ENCODE measurements at regions of chr9 and their contacts with region 1.

Region 1: GRCh38 chr9:109182940-109183798 is 16.1 kb upstream of the FRRS1L start:
- DNase-seq: peak; percentile 62 to 68
- ATAC-seq: peak; percentile 88 to 89
- H3K4me3 ChIP-seq: no peak overlapping the region
- H3K27ac ChIP-seq: no peak overlapping the region
- H3K4me1 ChIP-seq: 0 out of 3 replicates have a peak, but pooled peaks cover 3% of the 10 kb centered on the region
- CTCF ChIP-seq: peak; percentile 58
- EP300 ChIP-seq: no peak
- POLR2A ChIP-seq: no peak
- RAD21 ChIP-seq: peak; percentile 40 to 41; a peak in 3 of 5 replicates

Region 2: GRCh38 chr9:108978205-108978604 is 205.0 kb before region 1 on chr9:
- CTCF ChIA-PET with region 1: no interaction called
- POLR2A ChIA-PET with region 1: no interaction called
- DNase-seq: no peak
- ATAC-seq: no peak
- H3K4me3 ChIP-seq: no peak overlapping the region
- H3K27ac ChIP-seq: no peak overlapping the region
- H3K4me1 ChIP-seq: no peaks in the 10 kb centered on the region
- CTCF ChIP-seq: no peak
- EP300 ChIP-seq: no peak
- POLR2A ChIP-seq: no peak
- RAD21 ChIP-seq: no peak

Region 3: DNA sequence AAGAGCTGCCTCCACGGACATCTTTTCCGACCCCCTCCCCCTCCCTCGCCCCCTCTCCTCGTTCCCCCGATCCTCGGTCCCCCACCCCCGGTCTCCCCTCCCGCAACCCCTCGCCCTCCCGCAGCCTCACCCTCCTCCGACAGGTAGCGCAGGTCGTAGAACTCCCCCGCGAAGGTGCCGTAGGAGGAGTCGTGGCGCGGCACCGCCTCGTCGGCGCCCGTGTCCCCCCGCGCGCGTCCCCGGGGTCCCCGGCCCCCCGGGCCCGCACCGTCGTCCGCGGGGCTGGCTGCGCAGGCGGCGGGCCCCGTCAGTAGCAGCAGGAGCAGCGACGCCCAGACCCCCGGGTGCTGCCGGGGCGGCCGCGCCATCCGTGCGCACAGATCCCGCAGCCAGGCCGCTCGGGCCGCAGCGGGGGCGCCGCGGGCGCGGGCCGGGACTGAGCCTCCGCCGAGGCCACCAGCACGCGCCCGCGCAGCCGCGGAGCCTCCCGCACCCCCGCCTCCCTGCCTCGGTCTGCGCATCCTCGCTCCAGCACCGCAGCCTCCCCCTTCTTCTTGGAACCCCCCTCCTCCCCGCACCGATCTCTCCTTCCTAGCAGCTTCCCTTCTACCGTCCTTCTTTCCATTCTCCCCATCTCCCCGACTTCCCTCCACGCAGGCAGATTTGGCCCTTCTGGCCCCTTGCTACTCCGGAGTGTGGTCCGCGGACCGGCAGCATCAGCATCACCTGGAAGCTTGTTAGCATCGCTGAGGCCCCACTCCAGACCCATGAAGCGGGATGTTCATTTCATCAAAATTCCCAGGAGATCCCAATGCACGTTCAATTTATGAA is 16.2 kb before region 1 on chr9 and contains the start of gene FRRS1L:
- CTCF ChIA-PET with region 1: interaction called, 27 read pairs
- POLR2A ChIA-PET with region 1: no interaction called
- DNase-seq: no peak
- ATAC-seq: peak; percentile 59 to 60; a peak in 5 of 6 replicates
- H3K4me3 ChIP-seq: peak within 1 kb of the TSS; percentile 44
- H3K27ac ChIP-seq: peak within 1 kb of the TSS; percentile 47 to 76; a peak in 4 of 6 replicates
- H3K4me1 ChIP-seq: no peaks in the 10 kb centered on the region
- CTCF ChIP-seq: no peak
- EP300 ChIP-seq: no peak
- POLR2A ChIP-seq: no peak
- RAD21 ChIP-seq: no peak
- polyA plus RNA-seq, gene FRRS1L: 1.5 TPM in 2 replicates

Region 4: GRCh38 chr9:109213290-109214121 is 30.3 kb after region 1 on chr9:
- CTCF ChIA-PET with region 1: interaction called, 13 read pairs
- POLR2A ChIA-PET with region 1: no interaction called
- DNase-seq: no peak
- ATAC-seq: no peak
- H3K4me3 ChIP-seq: no peak overlapping the region
- H3K27ac ChIP-seq: no peak overlapping the region
- H3K4me1 ChIP-seq: no peaks in the 10 kb centered on the region
- CTCF ChIP-seq: no peak
- EP300 ChIP-seq: no peak
- POLR2A ChIP-seq: no peak
- RAD21 ChIP-seq: no peak

Region 5: GRCh38 chr9:109320742-109321448 is 137.7 kb after region 1 on chr9 and contains the start of gene EPB41L4B:
- CTCF ChIA-PET with region 1: interaction called, 46 read pairs
- POLR2A ChIA-PET with region 1: no interaction called
- DNase-seq: peak; percentile 72 to 91
- ATAC-seq: peak; percentile 83 to 90
- H3K4me3 ChIP-seq: peak within 1 kb of the TSS; percentile 85
- H3K27ac ChIP-seq: peak within 1 kb of the TSS; percentile 84 to 93
- H3K4me1 ChIP-seq: peaks cover 40% of the 10 kb centered on the region
- CTCF ChIP-seq: peak; percentile 92
- EP300 ChIP-seq: no peak
- POLR2A ChIP-seq: no peak
- RAD21 ChIP-seq: peak; percentile 93 to 99
- polyA plus RNA-seq, gene EPB41L4B: 18.6 and 22.0 TPM in 2 replicates

Region 6: GRCh38 chr9:109509611-109510010 is 326.4 kb after region 1 on chr9:
- CTCF ChIA-PET with region 1: no interaction called
- POLR2A ChIA-PET with region 1: no interaction called
- DNase-seq: no peak
- ATAC-seq: no peak
- H3K4me3 ChIP-seq: no peak overlapping the region
- H3K27ac ChIP-seq: peak overlapping the region in 1 of 2 experiments; percentile 19; a peak in 1 of 6 replicates
- H3K4me1 ChIP-seq: peaks cover 26% of the 10 kb centered on the region
- CTCF ChIP-seq: no peak
- EP300 ChIP-seq: no peak
- POLR2A ChIP-seq: no peak
- RAD21 ChIP-seq: no peak